Calu3 (cell line): ENCODE measurements at regions of chr3 and their contacts with region 1.

Region 1: DNA sequence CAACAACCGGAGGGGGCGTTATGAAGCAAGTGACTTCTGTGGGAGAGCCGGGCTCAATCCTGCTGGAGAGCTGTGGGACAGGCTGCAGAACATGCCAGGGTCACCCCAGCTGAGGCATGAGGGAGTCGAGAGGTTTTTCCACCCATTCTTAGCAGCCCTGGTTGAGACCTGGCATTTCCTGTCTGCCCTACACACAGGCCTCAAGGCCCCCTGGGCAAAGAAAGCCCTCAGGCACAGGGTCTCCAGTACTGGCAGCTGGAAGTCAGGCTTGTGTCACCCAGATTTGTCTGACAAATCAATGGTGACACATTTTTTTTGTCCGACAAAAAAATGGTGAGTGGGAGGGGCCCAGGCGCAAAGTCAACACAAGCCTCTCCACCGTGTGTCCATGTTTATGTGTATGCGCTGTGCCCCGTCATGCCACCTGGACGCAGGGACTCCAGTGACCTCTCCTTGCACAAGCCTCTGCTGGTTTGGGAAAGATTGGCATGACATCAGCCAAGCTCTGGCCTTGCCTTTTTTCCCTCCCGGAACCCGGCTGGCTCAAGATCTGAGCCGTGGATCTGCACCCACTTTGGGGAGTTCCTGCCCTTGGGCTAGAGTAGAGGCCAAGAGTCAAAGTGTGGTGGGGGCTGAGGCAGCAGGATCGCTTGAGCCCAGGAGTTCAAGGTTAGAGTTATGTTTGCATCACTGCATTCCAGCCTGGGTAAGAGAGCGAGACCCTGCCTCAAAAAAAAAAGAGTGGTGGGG is 20.8 kb upstream of the ALAS1 start:
- DNase-seq: peak; percentile 45
- H3K4me3 Mint-ChIP-seq: no peak overlapping the region
- H3K27ac Mint-ChIP-seq: no peak overlapping the region
- H3K4me1 Mint-ChIP-seq: peaks cover 20% of the 10 kb centered on the region
- H3K27me3 Mint-ChIP-seq: no peaks in the 10 kb centered on the region
- CTCF ChIP-seq: no peak

Region 2: DNA sequence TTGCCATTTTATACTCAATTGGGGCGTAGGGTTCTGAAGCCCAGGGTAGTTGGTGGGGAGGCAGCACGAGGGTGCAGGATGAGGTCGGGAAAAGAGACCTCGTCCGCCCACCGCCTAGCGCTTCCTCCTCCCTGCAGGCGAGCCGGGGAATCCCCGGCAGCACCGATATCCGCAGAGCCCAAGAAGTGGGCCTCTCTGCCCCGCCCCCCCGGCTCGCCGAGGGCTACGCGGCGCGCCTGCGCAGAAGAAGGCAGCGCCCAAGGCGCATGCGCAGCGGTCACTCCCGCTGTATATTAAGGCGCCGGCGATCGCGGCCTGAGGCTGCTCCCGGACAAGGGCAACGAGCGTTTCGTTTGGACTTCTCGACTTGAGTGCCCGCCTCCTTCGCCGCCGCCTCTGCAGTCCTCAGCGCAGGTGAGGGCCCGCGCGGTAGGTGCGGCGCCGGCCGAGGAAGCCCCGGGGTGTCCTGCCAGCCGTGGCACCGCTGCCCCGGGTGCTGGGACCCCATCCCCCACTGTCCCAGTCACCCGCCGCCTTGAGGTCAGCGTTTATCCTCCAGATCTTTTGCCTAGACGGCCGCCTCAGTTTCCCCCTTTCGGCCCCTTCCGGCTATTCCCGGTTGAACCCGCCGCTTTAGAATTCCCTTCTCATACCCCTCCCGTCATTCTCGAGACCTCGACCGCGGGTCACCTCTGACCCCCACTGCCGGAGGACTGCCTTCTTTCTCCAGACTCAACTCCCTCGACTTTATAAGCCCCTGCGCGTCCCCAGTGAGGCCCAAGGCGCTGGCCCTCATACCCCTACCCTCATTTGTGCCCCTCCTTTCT is 20.9 kb after region 1 on chr3 and contains the start of gene ALAS1:
- CTCF ChIA-PET with region 1: interaction called, 3 read pairs
- intact Hi-C with region 1: loop called (anchors 2 kb)
- DNase-seq: peak; percentile 95
- H3K4me3 Mint-ChIP-seq: peak within 1 kb of the TSS; percentile 96
- H3K27ac Mint-ChIP-seq: peak within 1 kb of the TSS; percentile 97
- H3K4me1 Mint-ChIP-seq: peaks cover 33% of the 10 kb centered on the region
- H3K27me3 Mint-ChIP-seq: no peaks in the 10 kb centered on the region
- CTCF ChIP-seq: no peak
- total RNA-seq, gene ALAS1: 80.2 and 81.7 TPM in 2 replicates